Activated T-helper 1 cell treated with anti-CD3 and anti-CD28 coated beads, Interleukin-12 subunit alpha, Interleukin-12 subunit beta, Interleukin-2, Interleukin-4 antibody, amounts not matched to agents 30 ng/mL and 10 ng/mL and 1 ng/mL, durations not matched to agents 14 hours and 24 hours and 36 hours (primary cell): ENCODE measurements at regions of chr2 and their contacts with region 1.

Region 1: DNA sequence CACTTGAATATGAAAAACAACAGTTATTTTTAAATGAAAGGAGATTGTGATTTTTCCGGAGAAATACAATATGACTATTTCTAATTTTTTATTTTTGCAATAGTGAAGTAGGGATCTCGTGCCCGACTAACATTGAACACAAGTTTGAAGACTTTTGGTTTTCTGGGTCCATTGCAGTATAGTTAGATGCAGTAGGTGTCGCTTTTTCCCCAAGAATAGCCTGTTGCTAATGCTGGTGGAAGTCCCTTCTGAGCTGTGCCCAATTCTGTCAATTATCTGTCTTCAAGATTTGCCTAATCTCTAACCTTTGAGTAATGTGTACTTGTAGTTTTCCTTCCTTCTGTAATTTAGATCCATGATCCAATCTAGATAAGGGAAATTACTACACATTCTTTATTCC is 36.5 kb downstream of the SEMA4F start:
- DNase-seq: no peak
- H3K4me3 Mint-ChIP-seq: no peak overlapping the region
- H3K27ac Mint-ChIP-seq: no peak overlapping the region
- H3K4me1 Mint-ChIP-seq: no peaks in the 10 kb centered on the region
- H3K27me3 Mint-ChIP-seq: peaks cover 13% of the 10 kb centered on the region

Region 2: GRCh38 chr2:75627895-75628504 is 937.4 kb after region 1 on chr2:
- intact Hi-C with region 1: loop called (anchors 5 kb)
- DNase-seq: peak; percentile 26
- H3K4me3 Mint-ChIP-seq: no peak overlapping the region
- H3K27ac Mint-ChIP-seq: no peak overlapping the region
- H3K4me1 Mint-ChIP-seq: no peaks in the 10 kb centered on the region
- H3K27me3 Mint-ChIP-seq: peaks cover 13% of the 10 kb centered on the region